Endothelial cell of umbilical vein (primary cell): ENCODE measurements at regions of chr10 and their contacts with region 1.

Region 1: DNA sequence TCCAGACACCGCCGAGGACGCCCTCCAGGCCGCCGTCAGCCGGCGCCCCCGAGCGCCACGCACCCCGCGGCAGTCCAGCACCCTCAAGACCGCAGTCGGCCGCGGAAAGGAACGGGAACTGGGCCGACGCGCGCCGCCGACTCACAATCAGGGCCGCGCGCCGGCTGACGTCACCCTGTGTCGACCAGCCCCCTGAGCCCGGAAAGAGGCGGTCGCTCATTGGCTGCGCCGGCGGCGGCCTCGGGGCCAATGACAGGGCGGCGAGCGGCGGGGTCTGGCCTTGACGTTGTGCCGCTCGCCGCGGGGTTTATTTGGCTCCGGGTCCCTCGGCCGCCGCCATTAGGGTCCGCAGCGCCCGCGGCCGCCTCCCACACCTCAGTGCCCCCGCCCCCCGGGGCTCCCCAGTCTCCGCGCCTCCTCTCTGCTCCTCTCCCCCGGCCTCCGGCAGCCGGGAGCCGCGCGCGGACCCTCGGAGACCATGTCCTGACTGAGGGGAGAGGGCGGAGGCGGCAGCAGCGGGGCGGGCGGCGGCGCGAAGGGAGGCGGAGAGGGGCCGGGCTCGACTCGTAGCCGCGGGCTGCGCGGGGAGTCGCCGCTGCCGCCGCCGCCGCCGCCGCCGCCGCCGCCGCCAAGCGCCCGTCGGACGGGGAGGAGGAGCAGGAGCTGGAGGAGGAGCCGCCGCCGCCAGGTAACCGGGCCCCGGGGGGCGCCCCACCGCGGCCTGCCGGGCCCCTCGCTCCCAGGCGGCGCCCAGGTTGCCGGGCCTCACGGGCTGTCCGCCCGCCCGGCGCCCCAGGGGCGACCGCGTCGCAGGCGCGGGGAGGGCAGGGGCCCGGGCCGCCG is 25.1 kb upstream of the ZRANB1 start:
- DNase-seq: peak; percentile 97
- H3K4me3 ChIP-seq: peak overlapping the region; percentile 89 to 96 (median 92)
- H3K27ac ChIP-seq: peak overlapping the region; percentile 83
- H3K4me1 ChIP-seq: peaks cover 16% of the 10 kb centered on the region
- H3K27me3 ChIP-seq: no peaks in the 10 kb centered on the region
- CTCF ChIP-seq: no peak
- POLR2A ChIP-seq: peak; percentile 96

Region 2: DNA sequence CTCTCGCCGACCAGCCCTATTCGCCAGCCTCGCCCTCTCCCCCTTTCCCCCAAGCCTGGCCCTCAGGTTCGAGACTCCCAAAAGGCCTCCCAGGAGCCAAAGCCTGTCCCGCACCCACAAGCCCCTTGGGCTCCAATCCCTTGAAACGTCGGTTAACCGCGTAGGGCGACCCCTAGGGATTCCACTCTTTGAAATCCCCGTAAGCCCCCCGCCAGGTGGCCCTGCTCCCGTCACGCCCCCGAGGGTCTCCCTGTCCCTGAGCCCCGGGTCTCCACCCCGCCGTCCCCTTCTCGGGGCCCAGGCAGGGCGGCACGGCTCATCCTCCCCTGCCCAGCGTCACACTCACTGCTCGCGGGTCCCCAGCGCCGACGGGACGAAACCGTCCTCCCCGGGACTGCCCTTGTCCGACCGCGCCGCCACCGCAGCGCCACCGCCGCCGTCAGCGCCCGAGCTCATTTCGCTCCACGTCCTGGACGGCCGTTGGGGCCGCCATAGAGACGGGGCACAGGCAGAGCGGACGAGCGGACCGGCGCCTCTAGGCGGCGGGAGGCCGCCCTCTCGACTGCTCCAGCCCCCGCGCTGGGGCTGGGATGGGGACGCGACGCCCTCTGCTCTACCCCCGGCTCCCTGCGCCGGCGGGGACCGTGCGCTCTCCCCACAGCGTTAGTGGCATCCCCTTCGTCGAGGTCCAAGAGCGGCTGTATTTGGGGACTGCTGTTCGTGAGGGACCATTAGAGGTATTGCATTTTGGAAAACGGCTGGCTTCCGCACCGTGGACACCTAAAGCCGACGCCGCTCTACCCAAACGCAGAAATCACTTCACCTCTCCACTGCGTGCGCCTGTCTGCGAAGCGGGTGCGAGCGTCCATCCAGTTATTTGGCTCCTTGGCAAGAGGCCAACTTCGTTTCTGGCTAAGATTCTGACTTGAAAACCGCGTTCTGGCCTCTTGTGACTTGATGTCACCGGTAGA is 125.1 kb before region 1 on chr10 and contains the start of gene EEF1AKMT2:
- CTCF ChIA-PET with region 1: no interaction called
- POLR2A ChIA-PET with region 1: no interaction called
- dilution Hi-C with region 1: no loop called
- intact Hi-C with region 1: loop called (anchors 5 kb)
- DNase-seq: peak; percentile 87
- H3K4me3 ChIP-seq: peak within 1 kb of the TSS; percentile 67 to 78 (median 72)
- H3K27ac ChIP-seq: peak within 1 kb of the TSS; percentile 60
- H3K4me1 ChIP-seq: peaks cover 2% of the 10 kb centered on the region
- H3K27me3 ChIP-seq: peaks cover 0 to 1% of the 10 kb centered on the region in 2 experiments
- CTCF ChIP-seq: no peak
- POLR2A ChIP-seq: peak; percentile 86
- total RNA-seq, gene EEF1AKMT2: 17.1 and 21.3 TPM in 2 replicates

Region 3: DNA sequence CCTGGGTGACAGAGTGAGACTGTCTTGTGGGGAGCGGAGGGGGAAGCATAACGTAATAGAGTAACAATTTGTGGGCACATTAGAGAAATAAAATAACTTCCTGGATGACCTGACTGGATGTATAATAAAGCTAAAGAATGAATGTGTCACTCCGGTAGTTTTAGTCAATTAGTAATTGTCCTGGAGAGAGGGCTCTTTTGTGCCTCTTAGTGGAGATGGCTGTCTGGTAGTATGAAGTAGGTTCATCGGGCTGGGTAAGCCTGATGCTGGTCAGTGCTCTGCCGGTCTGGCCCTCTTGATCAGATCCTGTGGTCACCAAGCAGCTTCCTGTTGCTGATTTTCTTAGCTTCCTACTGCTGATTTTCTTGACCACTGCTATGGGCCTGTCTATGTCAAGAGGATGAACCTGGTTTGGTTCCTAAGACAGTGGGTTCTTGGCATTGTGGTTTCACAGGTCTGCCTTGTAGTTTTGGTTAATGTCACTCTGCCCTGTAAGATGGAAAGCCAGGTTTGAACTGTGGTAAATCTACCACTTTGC is 59.2 kb after region 1 on chr10:
- CTCF ChIA-PET with region 1: interaction called, 7 read pairs
- POLR2A ChIA-PET with region 1: no interaction called
- dilution Hi-C with region 1: no loop called
- intact Hi-C with region 1: loop called (anchors 1 kb)
- DNase-seq: peak; percentile 64
- H3K4me3 ChIP-seq: no peak overlapping the region
- H3K27ac ChIP-seq: peak overlapping the region; percentile 56
- H3K4me1 ChIP-seq: peaks cover 16% of the 10 kb centered on the region
- H3K27me3 ChIP-seq: no peaks in the 10 kb centered on the region
- CTCF ChIP-seq: no peak
- POLR2A ChIP-seq: no peak

Region 4: DNA sequence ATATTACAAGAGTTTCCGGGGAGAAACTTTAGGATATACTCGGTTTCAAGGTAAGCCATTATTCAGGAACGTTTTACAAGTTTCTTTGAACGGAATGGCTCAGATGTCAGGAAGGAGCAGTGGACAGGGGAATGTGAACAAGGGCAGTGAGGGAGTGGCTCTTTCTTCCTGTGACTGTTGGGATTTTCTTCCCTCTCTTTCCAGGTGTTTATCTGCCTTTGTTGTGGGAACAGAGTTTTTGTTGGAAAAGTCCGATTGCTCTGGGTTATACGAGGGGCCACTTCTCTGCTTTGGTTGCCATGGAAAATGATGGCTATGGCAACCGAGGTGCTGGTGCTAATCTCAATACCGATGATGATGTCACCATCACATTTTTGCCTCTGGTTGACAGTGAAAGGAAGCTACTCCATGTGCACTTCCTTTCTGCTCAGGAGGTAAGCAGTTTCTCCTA is 66.5 kb after region 1 on chr10:
- CTCF ChIA-PET with region 1: no interaction called
- POLR2A ChIA-PET with region 1: no interaction called
- dilution Hi-C with region 1: no loop called
- intact Hi-C with region 1: loop called (anchors 2 kb)
- DNase-seq: peak; percentile 55
- H3K4me3 ChIP-seq: no peak overlapping the region
- H3K27ac ChIP-seq: peak overlapping the region; percentile 10
- H3K4me1 ChIP-seq: peaks cover 4% of the 10 kb centered on the region
- H3K27me3 ChIP-seq: no peaks in the 10 kb centered on the region
- CTCF ChIP-seq: no peak
- POLR2A ChIP-seq: no peak

Region 5: GRCh38 chr10:125060826-125061556 is 144.2 kb after region 1 on chr10:
- CTCF ChIA-PET with region 1: no interaction called
- POLR2A ChIA-PET with region 1: no interaction called
- dilution Hi-C with region 1: no loop called
- intact Hi-C with region 1: loop called (anchors 2 kb)
- DNase-seq: peak; percentile 80
- H3K4me3 ChIP-seq: no peak overlapping the region
- H3K27ac ChIP-seq: peak overlapping the region; percentile 44
- H3K4me1 ChIP-seq: peaks cover 57% of the 10 kb centered on the region
- H3K27me3 ChIP-seq: no peaks in the 10 kb centered on the region
- CTCF ChIP-seq: peak; percentile 82 to 90
- POLR2A ChIP-seq: no peak

Region 6: GRCh38 chr10:125605167-125605566 is 688.4 kb after region 1 on chr10:
- CTCF ChIA-PET with region 1: no interaction called
- POLR2A ChIA-PET with region 1: no interaction called
- dilution Hi-C with region 1: no loop called
- intact Hi-C with region 1: loop called (anchors 5 kb)
- DNase-seq: peak; percentile 21
- H3K4me3 ChIP-seq: no peak overlapping the region
- H3K27ac ChIP-seq: no peak overlapping the region
- H3K4me1 ChIP-seq: peaks cover 28% of the 10 kb centered on the region
- H3K27me3 ChIP-seq: peaks cover 0 to 2% of the 10 kb centered on the region in 2 experiments
- CTCF ChIP-seq: no peak
- POLR2A ChIP-seq: no peak

Region 7: GRCh38 chr10:125822878-125823662 is 906.3 kb after region 1 on chr10 and contains the starts of genes BCCIP and UROS:
- CTCF ChIA-PET with region 1: no interaction called
- POLR2A ChIA-PET with region 1: no interaction called
- dilution Hi-C with region 1: no loop called
- intact Hi-C with region 1: loop called (anchors 2 kb)
- DNase-seq: peak; percentile 90
- H3K4me3 ChIP-seq: peak within 1 kb of the TSS; percentile 78 to 83 (median 79)
- H3K27ac ChIP-seq: peak within 1 kb of the TSS; percentile 89
- H3K4me1 ChIP-seq: peaks cover 18% of the 10 kb centered on the region
- H3K27me3 ChIP-seq: no peaks in the 10 kb centered on the region
- CTCF ChIP-seq: no peak
- POLR2A ChIP-seq: no peak
- total RNA-seq, gene BCCIP: 61.3 and 73.5 TPM in 2 replicates
- total RNA-seq, gene UROS: 38.4 and 40.2 TPM in 2 replicates